ENCODE measurements at regions of chr15 and their contacts with region 1.

Region 1: DNA sequence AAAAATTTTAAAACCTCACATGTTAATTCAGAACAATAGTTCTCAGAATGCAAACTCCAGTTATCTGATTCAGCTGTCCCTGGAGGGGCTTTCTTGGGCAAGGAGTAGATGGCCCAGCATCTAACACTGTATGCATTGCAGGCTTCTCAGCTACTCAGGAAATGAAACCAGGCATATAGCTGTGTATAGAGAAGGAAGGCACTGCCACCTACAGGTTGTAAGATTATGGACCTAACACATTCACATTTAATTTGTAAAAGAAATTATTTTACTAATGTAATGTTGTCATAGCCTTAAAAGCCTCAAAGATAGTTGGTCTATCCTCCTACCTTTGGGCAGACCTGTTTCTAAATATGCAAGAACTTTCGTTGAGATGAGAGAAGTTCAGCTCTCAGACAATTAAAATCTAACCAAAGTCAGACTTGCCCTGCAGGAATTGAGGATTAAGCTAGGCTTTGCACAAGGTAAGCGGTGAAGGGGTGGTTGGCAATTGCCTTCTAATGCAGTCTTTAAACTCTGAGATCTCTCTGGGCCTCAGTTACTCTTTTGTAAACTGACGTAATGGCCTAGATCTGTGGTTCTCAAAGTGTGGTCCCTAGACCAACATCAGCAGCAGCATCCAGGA is 132.8 kb upstream of the SLC24A5 start:
- DNase-seq: peak; percentile 87
- H3K4me3 ChIP-seq: no peak overlapping the region
- H3K27ac ChIP-seq: no peak overlapping the region
- H3K4me1 ChIP-seq: peaks cover 12% of the 10 kb centered on the region
- H3K27me3 ChIP-seq: no peaks in the 10 kb centered on the region
- CTCF ChIP-seq: peak; percentile 73

Region 2: GRCh38 chr15:47196057-47196456 is 792.0 kb before region 1 on chr15:
- CTCF ChIA-PET with region 1: interaction called, 39 read pairs
- POLR2A ChIA-PET with region 1: no interaction called
- intact Hi-C with region 1: loop called (anchors 1 kb)
- DNase-seq: peak; percentile 98
- H3K4me3 ChIP-seq: no peak overlapping the region
- H3K27ac ChIP-seq: peak overlapping the region; percentile 22
- H3K4me1 ChIP-seq: peaks cover 46% of the 10 kb centered on the region
- H3K27me3 ChIP-seq: no peaks in the 10 kb centered on the region
- CTCF ChIP-seq: peak; percentile 88

Region 3: DNA sequence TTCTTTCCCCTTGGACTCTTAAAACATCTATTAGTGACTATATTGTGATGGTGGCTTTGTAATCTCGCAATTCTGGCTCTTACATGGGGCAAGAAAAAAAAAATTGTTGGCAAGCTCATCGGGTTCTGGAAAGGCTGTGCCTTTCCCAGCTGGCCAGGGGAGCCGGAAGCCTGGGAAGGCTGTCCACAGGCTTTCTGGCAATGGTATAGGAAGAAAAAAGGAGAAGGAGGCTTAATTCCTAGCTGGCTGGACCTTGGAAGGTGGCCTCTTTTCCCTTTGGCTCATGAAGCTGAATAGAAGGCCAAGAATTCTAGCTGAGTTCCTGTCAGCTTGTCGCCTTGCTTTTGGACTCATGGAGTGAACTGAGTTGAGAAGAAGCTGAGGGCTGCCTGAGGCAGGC is 514.2 kb before region 1 on chr15:
- CTCF ChIA-PET with region 1: interaction called, 7 read pairs
- POLR2A ChIA-PET with region 1: no interaction called
- intact Hi-C with region 1: loop called (anchors 2 kb)
- DNase-seq: no peak
- H3K4me3 ChIP-seq: no peak overlapping the region
- H3K27ac ChIP-seq: no peak overlapping the region
- H3K4me1 ChIP-seq: peaks cover 29% of the 10 kb centered on the region
- H3K27me3 ChIP-seq: no peaks in the 10 kb centered on the region
- CTCF ChIP-seq: no peak

Region 4: DNA sequence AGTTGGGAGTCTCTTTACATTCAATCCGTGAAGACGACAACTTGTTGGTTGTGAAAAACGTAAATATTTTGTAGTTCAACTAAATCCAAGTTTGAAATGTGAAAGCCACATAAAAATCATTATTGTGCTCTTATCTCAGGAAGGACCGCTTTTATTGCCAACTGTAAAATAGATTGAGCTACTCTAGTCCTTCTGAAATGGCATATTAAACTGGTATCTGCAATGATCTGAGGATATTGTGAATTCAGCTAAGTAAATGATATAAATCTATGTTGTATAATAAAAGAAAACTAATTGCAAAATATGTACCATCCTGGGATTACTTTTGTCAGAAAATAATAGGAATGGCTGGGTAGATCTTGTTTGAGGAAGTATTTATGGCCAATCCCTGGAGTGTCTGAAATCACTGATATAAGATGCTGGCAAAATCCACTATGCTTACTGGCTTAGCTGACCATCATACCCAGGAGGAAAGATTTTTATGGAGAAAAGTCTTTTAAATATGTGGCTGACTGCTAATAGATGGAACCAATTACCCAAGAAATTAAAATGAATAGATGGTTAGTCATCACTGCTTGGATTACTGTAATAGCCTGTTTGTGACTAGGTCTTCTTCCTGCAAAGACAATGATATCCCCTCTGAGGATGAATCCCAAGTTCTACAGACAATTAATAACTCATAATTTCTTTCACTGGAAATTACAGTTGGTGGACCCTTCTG is 78.9 kb before region 1 on chr15:
- CTCF ChIA-PET with region 1: interaction called, 4 read pairs
- POLR2A ChIA-PET with region 1: no interaction called
- intact Hi-C with region 1: loop called (anchors 5 kb)
- DNase-seq: peak; percentile 80
- H3K4me3 ChIP-seq: no peak overlapping the region
- H3K27ac ChIP-seq: no peak overlapping the region
- H3K4me1 ChIP-seq: peaks cover 31% of the 10 kb centered on the region
- H3K27me3 ChIP-seq: no peaks in the 10 kb centered on the region
- CTCF ChIP-seq: no peak

Region 5: DNA sequence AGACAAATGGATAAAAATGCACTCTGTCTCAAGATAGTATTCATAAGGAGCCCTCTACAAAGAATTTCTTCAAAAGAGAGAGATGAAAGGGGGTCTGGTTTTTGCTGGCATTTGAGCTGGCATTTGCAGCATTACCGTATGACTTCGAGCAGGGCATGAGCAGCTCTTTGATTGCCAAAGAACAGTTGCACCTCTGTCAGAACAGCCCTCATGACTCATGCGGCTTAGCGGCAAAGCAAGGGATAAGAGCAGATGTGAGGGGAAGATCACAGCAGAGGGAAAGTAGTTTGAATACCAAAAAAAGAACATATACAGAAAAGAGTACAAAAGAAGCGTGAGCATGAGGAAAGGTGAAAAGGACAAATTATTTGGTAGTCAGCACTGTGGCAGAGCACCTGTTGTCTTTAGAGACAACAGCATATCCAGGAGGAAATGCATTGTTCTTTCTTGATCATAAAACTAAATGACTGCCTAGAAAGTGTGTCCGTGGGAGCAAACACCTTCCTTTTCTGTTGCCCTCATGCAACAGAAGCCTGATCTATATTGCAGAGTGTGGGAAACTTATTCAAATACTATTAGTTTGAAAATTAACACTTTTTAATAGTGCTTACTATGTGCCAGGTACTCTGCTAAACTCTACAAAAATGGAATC is 52.3 kb after region 1 on chr15:
- CTCF ChIA-PET with region 1: no interaction called
- POLR2A ChIA-PET with region 1: no interaction called
- intact Hi-C with region 1: no loop called
- DNase-seq: peak; percentile 48
- H3K4me3 ChIP-seq: no peak overlapping the region
- H3K27ac ChIP-seq: no peak overlapping the region
- H3K4me1 ChIP-seq: no peaks in the 10 kb centered on the region
- H3K27me3 ChIP-seq: no peaks in the 10 kb centered on the region
- CTCF ChIP-seq: no peak

Region 6: GRCh38 chr15:48250640-48251076 is 262.6 kb after region 1 on chr15:
- CTCF ChIA-PET with region 1: no interaction called
- POLR2A ChIA-PET with region 1: no interaction called
- intact Hi-C with region 1: loop called (anchors 10 kb)
- DNase-seq: peak; percentile 87
- H3K4me3 ChIP-seq: no peak overlapping the region
- H3K27ac ChIP-seq: no peak overlapping the region
- H3K4me1 ChIP-seq: no peaks in the 10 kb centered on the region
- H3K27me3 ChIP-seq: no peaks in the 10 kb centered on the region
- CTCF ChIP-seq: peak; percentile 76

Measured in A673 (cell line).